Prostate gland (tissue), 2 donors: ENCODE measurements at regions of chr4 and their contacts with region 1.

Region 1: GRCh38 chr4:78951862-78952472 is 12.7 kb upstream of the PAQR3 start:
- DNase-seq: peak; percentile 35
- H3K4me3 ChIP-seq: no peak overlapping the region
- H3K27ac ChIP-seq: no peak overlapping the region
- H3K4me1 ChIP-seq: peaks cover 7% of the 10 kb centered on the region
- H3K27me3 ChIP-seq: no peaks in the 10 kb centered on the region
- CTCF ChIP-seq: peak in 3 of 4 experiments; percentile 61 to 73 (median 73)
- POLR2A ChIP-seq: no peak

Region 2: DNA sequence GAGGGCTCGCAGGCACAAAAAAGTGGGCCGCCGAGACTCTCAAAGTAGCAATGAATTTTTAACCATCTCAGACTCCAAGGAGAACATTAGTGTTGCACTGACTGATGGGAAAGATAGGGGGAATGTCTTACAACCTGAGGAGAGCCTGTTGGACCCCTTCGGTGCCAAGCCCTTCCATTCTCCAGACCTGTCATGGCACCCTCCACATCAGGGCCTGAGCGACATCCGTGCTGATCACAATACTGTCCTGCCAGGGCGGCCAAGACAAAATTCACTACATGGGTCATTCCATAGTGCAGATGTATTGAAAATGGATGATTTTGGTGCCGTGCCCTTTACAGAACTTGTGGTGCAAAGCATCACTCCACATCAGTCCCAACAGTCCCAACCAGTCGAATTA is 40.4 kb before region 1 on chr4:
- intact Hi-C with region 1: no loop called
- DNase-seq: no peak
- H3K4me3 ChIP-seq: no peak overlapping the region
- H3K27ac ChIP-seq: no peak overlapping the region
- H3K4me1 ChIP-seq: no peaks in the 10 kb centered on the region
- H3K27me3 ChIP-seq: no peaks in the 10 kb centered on the region
- CTCF ChIP-seq: no peak
- POLR2A ChIP-seq: no peak

Region 3: GRCh38 chr4:79042079-79042674 is 90.2 kb after region 1 on chr4:
- intact Hi-C with region 1: loop called (anchors 10 kb)
- DNase-seq: peak; percentile 31
- H3K4me3 ChIP-seq: no peak overlapping the region
- H3K27ac ChIP-seq: no peak overlapping the region
- H3K4me1 ChIP-seq: no peaks in the 10 kb centered on the region
- H3K27me3 ChIP-seq: no peaks in the 10 kb centered on the region
- CTCF ChIP-seq: peak in 3 of 4 experiments; percentile 63 to 78 (median 64)
- POLR2A ChIP-seq: no peak

Region 4: DNA sequence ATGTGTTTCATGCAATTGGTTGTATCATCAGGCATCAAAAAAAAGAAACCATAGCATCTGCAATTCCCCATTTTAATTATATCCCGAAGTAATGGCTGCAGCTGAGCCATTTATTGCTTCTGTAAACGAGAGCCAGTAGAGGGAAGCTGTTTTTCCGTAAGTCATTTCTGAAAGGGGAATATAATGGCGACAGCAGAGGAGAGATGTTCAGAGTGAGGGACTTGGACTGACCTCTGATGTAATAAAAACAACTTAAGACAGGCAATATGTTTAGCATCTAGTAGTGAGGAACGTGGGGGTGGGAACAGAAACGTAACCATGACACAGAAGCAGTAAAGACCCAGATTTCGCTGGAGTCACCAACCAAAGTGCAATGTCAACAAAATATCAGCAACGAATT is 405.4 kb after region 1 on chr4:
- intact Hi-C with region 1: no loop called
- DNase-seq: no peak
- H3K4me3 ChIP-seq: no peak overlapping the region
- H3K27ac ChIP-seq: no peak overlapping the region
- H3K4me1 ChIP-seq: no peaks in the 10 kb centered on the region
- H3K27me3 ChIP-seq: no peaks in the 10 kb centered on the region
- CTCF ChIP-seq: no peak
- POLR2A ChIP-seq: no peak

Region 5: GRCh38 chr4:79576429-79576753 is 624.4 kb after region 1 on chr4:
- intact Hi-C with region 1: loop called (anchors 5 kb)
- DNase-seq: no peak
- H3K4me3 ChIP-seq: no peak overlapping the region
- H3K27ac ChIP-seq: peak overlapping the region in 1 of 2 donors; percentile 23
- H3K4me1 ChIP-seq: no peaks in the 10 kb centered on the region
- H3K27me3 ChIP-seq: no peaks in the 10 kb centered on the region
- CTCF ChIP-seq: peak in 3 of 4 experiments; percentile 40 to 49 (median 48)
- POLR2A ChIP-seq: no peak

Region 6: DNA sequence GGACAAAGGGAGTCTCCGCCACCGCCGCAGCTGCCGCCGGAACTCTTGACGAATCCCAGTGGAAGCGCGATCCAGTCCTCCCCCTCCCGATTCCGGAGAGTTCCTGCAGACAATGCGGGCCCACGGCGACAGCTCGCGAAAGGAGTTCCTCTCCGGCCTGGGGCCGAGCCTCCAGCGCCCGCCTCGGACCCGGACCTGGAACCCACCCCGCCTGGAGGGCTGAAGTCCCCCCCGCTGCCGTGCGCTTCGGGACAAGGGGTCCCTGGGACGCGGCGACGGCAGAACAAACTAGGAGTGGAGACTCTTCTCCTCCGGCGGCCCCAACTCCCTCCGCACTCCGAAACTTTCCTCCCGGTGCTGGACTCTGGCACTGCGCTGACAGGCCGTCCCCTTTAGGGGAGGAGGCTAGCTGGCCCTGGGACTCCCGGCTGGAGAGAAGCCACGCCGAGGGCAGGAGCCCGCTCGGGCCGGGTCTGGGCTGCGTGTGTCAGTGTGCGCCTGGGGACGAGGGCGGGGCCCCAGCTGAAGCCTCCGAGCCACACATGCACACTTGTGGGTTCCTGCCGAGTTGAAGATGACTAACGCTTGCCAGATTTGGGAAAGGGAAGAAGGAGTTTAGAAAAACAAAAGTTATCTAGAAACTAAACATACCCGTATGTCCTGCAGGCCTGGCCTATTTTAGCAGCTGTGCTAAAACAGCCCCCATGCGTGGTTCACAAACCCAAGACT is 1120.9 kb after region 1 on chr4 and contains the start of gene ANTXR2:
- intact Hi-C with region 1: loop called (anchors 10 kb)
- DNase-seq: peak; percentile 83
- H3K4me3 ChIP-seq: peak within 1 kb of the TSS; percentile 87 to 98
- H3K27ac ChIP-seq: peak within 1 kb of the TSS; percentile 93 to 94
- H3K4me1 ChIP-seq: no peaks in the 10 kb centered on the region
- H3K27me3 ChIP-seq: no peaks in the 10 kb centered on the region
- CTCF ChIP-seq: peak in 1 of 4 experiments; percentile 15
- POLR2A ChIP-seq: peak; percentile 57
- total RNA-seq, gene ANTXR2: 86.1 to 133 TPM

Region 7: GRCh38 chr4:80215449-80216052 is 1263.6 kb after region 1 on chr4:
- intact Hi-C with region 1: loop called (anchors 2 kb)
- DNase-seq: no peak
- H3K4me3 ChIP-seq: no peak overlapping the region
- H3K27ac ChIP-seq: no peak overlapping the region
- H3K4me1 ChIP-seq: no peaks in the 10 kb centered on the region
- H3K27me3 ChIP-seq: no peaks in the 10 kb centered on the region
- CTCF ChIP-seq: peak; percentile 28 to 85 (median 74)
- POLR2A ChIP-seq: no peak